ENCODE measurements at regions of chr4 and their contacts with region 1.

Region 1: DNA sequence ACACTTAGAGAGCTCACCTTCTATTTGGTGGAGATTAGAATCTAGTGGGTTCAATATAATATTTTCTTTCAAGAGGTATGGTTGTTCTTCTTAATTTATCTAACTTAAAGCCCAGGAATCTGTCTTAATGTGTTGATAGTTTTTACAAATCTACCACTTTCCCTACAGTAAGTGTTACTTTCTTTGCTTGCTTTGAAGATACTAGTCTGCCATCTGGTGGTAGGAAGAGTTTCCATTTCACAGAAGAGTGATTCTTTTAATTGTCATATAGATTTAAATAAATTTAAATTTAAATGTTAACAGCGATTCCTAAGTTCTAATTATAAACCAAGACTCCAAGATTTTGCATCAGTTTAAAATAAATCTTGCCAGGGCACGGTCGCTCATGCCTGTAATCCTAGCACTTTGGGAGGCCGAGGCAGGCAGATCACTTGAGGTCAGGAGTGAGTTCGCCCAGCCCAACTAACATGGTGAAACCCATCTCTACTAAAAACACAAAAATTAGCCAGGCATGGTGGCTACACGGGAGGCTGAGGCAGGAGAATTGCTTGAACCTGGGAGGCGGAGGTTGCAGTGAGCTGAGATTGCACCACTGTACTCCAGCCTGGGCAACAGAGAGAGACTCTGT is 43.5 kb downstream of the NUDT9 start:
- ATAC-seq: peak in 4 of 8 experiments; percentile 31 to 80 (median 64)
- H3K4me3 ChIP-seq: no peak overlapping the region
- H3K27ac ChIP-seq: no peak overlapping the region
- H3K4me1 ChIP-seq: no peaks in the 10 kb centered on the region

Region 2: GRCh38 chr4:87270144-87270543 is 195.7 kb before region 1 on chr4:
- in situ Hi-C with region 1: loop called in 2 of 9 experiments (anchors 25 kb)
- ATAC-seq: peak in 5 of 8 experiments; percentile 48 to 92 (median 67)
- H3K4me3 ChIP-seq: no peak overlapping the region
- H3K27ac ChIP-seq: no peak overlapping the region
- H3K4me1 ChIP-seq: peaks cover 0 to 11% of the 10 kb centered on the region in 2 donors

Region 3: GRCh38 chr4:87353592-87353991 is 112.3 kb before region 1 on chr4:
- in situ Hi-C with region 1: loop called in 1 of 9 experiments (anchors 25 kb)
- ATAC-seq: peak in 4 of 8 experiments; percentile 64 to 93 (median 85)
- H3K4me3 ChIP-seq: no peak overlapping the region
- H3K27ac ChIP-seq: no peak overlapping the region
- H3K4me1 ChIP-seq: no peaks in the 10 kb centered on the region

Region 4: GRCh38 chr4:87555773-87556619 is 90.1 kb after region 1 on chr4:
- in situ Hi-C with region 1: no loop called
- ATAC-seq: peak in 3 of 8 experiments; percentile 28 to 96 (median 88)
- H3K4me3 ChIP-seq: no peak overlapping the region
- H3K27ac ChIP-seq: no peak overlapping the region
- H3K4me1 ChIP-seq: no peaks in the 10 kb centered on the region